ENCODE measurements at regions of chr10 and their contacts with region 1.

Region 1: DNA sequence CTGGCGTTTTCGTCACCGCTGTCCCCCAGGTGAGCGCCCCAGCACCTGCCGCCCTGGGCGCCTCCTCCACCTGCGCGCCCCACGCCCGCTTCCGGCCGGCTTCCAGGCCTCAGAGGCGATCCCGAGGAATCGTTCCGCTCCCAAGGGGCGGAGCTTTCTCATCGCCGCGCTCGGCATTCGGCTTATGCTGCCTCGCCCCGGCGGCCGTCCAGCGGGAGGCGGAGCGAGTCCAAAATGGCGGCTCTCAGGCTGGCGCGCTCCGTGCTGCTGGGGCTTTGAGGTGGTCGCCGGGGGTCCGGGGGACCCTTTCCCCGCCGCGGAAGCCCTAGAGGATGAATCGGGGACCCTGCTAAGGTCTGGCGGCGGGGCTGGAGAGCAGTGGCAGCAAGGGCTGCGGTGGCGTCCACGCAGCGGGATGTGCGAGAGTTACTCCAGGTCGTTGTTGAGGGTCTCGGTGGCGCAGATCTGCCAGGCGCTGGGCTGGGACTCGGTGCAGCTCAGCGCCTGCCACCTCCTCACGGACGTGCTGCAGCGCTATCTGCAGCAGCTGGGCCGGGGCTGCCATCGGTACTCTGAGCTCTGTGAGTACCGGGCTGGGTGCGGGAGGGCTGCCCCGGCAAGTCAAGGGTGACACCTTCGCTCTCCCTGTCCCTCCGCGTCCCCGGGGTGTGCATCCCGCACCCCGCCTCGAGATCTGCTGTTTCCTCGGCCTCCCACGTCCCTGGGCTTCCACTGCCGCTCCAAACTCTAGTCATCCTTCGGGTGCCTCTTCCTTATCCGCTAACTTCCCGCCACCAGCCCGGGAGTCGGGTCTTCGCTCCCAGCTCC is at the start of gene TAF3:
- DNase-seq: peak; percentile 88
- H3K4me3 ChIP-seq: peak within 1 kb of the TSS; percentile 83 to 99 (median 93)
- H3K27ac ChIP-seq: peak within 1 kb of the TSS; percentile 31
- H3K4me1 ChIP-seq: peaks cover 11% of the 10 kb centered on the region
- H3K27me3 ChIP-seq: no peaks in the 10 kb centered on the region
- CTCF ChIP-seq: no peak
- total RNA-seq, gene TAF3: 2.5 to 11.2 TPM

Region 2: DNA sequence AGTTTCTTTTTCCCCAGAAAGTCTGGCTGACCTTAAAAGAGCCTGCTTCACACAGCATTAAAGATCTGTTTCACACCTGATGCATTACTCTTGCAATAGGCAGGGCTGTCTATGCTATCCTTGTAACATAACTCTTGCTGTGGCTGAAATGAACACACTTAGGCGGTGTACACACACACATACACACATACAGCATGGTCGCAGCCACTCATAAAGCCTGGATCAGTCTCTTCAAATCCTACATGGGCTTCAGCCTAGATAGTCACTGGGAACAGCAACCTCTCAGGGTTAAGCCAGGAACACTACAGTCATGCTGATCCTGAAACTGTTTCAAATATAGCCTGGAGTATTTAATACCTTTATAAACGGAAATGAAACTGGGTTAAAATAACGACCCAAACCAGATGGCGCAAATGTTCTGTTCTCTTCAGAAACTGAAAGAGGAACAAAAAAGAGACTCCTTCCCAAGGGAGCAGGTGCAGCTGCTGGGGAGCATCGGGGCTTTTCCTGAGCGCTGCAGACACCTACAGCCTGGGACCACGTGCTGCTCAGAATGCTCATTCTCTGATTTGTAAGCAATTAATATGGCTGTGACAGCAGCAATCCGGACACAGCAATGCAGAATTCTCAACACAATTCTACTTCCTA is 346.7 kb before region 1 on chr10:
- CTCF ChIA-PET with region 1: no interaction called
- dilution Hi-C with region 1: no loop called
- in situ Hi-C with region 1: no loop called
- intact Hi-C with region 1: no loop called
- DNase-seq: no peak
- H3K4me3 ChIP-seq: no peak overlapping the region
- H3K27ac ChIP-seq: no peak overlapping the region
- H3K4me1 ChIP-seq: no peaks in the 10 kb centered on the region
- H3K27me3 ChIP-seq: no peaks in the 10 kb centered on the region
- CTCF ChIP-seq: no peak

Region 3: GRCh38 chr10:7756360-7756992 is 62.0 kb before region 1 on chr10:
- CTCF ChIA-PET with region 1: interaction called, 9 read pairs
- dilution Hi-C with region 1: no loop called
- in situ Hi-C with region 1: no loop called
- intact Hi-C with region 1: loop called (anchors 5 kb)
- DNase-seq: peak; percentile 14
- H3K4me3 ChIP-seq: no peak overlapping the region
- H3K27ac ChIP-seq: no peak overlapping the region
- H3K4me1 ChIP-seq: no peaks in the 10 kb centered on the region
- H3K27me3 ChIP-seq: no peaks in the 10 kb centered on the region
- CTCF ChIP-seq: peak; percentile 30 to 57

Region 4: GRCh38 chr10:7787857-7788638 is 30.5 kb before region 1 on chr10 and contains the starts of genes ATP5F1C and KIN:
- CTCF ChIA-PET with region 1: no interaction called
- dilution Hi-C with region 1: no loop called
- in situ Hi-C with region 1: no loop called
- intact Hi-C with region 1: loop called (anchors 2 kb)
- DNase-seq: peak; percentile 93
- H3K4me3 ChIP-seq: peak within 1 kb of the TSS; percentile 74 to 99 (median 85)
- H3K27ac ChIP-seq: peak within 1 kb of the TSS; percentile 68
- H3K4me1 ChIP-seq: peaks cover 19% of the 10 kb centered on the region
- H3K27me3 ChIP-seq: no peaks in the 10 kb centered on the region
- CTCF ChIP-seq: no peak
- total RNA-seq, gene ATP5F1C: 172 to 250 TPM
- total RNA-seq, gene KIN: 4.7 to 14.4 TPM

Region 5: GRCh38 chr10:7886025-7886424 is 67.5 kb after region 1 on chr10:
- CTCF ChIA-PET with region 1: no interaction called
- dilution Hi-C with region 1: no loop called
- in situ Hi-C with region 1: no loop called
- intact Hi-C with region 1: no loop called
- DNase-seq: peak; percentile 7
- H3K4me3 ChIP-seq: no peak overlapping the region
- H3K27ac ChIP-seq: no peak overlapping the region
- H3K4me1 ChIP-seq: no peaks in the 10 kb centered on the region
- H3K27me3 ChIP-seq: no peaks in the 10 kb centered on the region
- CTCF ChIP-seq: no peak